Prostate gland (tissue), 2 donors: ENCODE measurements at regions of chr13 and their contacts with region 1.

Region 1: DNA sequence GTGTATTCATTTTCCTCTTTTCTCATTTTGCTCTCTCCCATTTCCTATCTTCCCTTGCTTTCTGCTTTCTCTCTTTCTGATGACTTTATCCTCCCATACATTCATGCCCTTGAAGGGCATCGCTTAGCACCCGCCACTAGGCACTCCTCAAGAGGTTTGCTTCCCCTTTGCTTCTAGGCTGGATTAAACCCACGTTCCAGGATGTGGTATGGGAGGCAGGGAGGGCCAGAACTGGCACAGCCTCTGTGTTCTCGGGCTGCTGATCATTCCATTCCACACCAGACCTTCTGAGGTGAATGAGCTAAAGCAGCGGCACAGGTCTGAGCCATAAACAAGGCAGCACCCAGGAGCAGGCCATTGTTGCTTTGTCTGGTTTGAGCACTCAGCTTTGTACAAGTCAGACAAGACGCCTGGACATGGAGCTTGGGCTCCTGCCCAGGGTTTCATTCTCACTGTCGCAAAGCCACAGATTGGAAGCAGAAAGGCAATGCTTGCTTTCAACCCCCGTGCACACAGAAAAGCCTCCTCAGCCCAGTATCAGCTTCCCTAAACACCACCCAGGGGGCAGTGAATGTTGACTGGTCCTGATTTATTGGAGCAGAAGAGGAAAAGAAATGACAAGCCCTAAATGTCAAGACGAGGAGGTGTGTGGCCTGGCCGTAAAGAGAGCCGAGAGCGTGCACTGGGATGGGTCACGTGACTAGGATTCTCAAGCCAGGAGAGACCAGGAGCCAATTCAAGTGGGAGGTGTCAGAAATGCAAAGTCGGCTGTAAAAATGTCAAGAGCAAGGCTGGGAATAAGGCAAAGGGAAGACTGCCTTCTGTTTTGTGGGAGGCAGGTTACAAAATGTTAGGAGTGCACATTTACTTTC is 218.0 kb upstream of the SERP2 start:
- DNase-seq: peak; percentile 78
- H3K4me3 ChIP-seq: peak overlapping the region in 1 of 2 donors; percentile 19
- H3K27ac ChIP-seq: peak overlapping the region; percentile 59 to 68
- H3K4me1 ChIP-seq: peaks cover 6% of the 10 kb centered on the region
- H3K27me3 ChIP-seq: no peaks in the 10 kb centered on the region
- CTCF ChIP-seq: no peak
- POLR2A ChIP-seq: no peak

Region 2: GRCh38 chr13:43567608-43568007 is 588.0 kb before region 1 on chr13:
- intact Hi-C with region 1: no loop called
- DNase-seq: no peak
- H3K4me3 ChIP-seq: no peak overlapping the region
- H3K27ac ChIP-seq: no peak overlapping the region
- H3K4me1 ChIP-seq: no peaks in the 10 kb centered on the region
- H3K27me3 ChIP-seq: no peaks in the 10 kb centered on the region
- CTCF ChIP-seq: no peak
- POLR2A ChIP-seq: no peak

Region 3: GRCh38 chr13:44306401-44307192 is 150.9 kb after region 1 on chr13:
- intact Hi-C with region 1: loop called (anchors 5 kb)
- DNase-seq: peak; percentile 74
- H3K4me3 ChIP-seq: no peak overlapping the region
- H3K27ac ChIP-seq: peak overlapping the region; percentile 81 to 84
- H3K4me1 ChIP-seq: peaks cover 24% of the 10 kb centered on the region
- H3K27me3 ChIP-seq: no peaks in the 10 kb centered on the region
- CTCF ChIP-seq: no peak
- POLR2A ChIP-seq: no peak